CD8-positive, alpha-beta T cell (primary cell): ENCODE measurements at regions of chr2 and their contacts with region 1.

Region 1: GRCh38 chr2:20642055-20642971 is 8.6 kb downstream of the HS1BP3 start:
- DNase-seq: peak; percentile 52 to 83 (median 71)
- ATAC-seq: peak; percentile 100
- H3K4me3 ChIP-seq: no peak overlapping the region
- H3K4me3 Mint-ChIP-seq: no peak overlapping the region
- H3K27ac ChIP-seq: no peak overlapping the region
- H3K27ac Mint-ChIP-seq: no peak overlapping the region
- H3K4me1 ChIP-seq: peaks cover 4% of the 10 kb centered on the region
- H3K4me1 Mint-ChIP-seq: peaks cover 4% of the 10 kb centered on the region
- H3K27me3 ChIP-seq: no peaks in the 10 kb centered on the region
- H3K27me3 Mint-ChIP-seq: no peaks in the 10 kb centered on the region
- CTCF ChIP-seq: peak; percentile 69

Region 2: DNA sequence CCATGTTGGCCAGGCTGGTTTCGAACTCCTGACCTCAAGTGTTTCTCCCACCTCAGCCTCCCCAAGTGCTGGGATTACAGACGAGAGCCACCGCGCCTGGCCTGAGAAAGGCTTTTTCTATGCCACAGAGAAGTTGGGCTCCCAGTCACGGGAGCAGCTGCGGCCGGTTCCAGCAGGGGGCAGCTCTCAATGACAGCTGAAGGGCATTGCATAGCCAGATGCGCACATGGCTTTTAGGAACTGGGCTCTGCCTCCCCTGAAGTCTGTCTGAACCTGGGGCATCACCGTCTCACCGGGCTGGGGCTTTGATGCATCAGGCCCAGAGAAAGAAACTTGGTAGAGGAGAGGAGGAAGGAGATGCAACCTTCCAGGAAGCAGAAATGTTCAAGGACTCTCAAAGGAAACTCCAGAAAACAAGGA is 506.7 kb before region 1 on chr2:
- CTCF ChIA-PET with region 1: no interaction called
- POLR2A ChIA-PET with region 1: no interaction called
- intact Hi-C with region 1: loop called in 1 of 2 experiments (anchors 5 kb)
- DNase-seq: peak in 4 of 9 experiments; percentile 13 to 23 (median 18)
- ATAC-seq: no peak
- H3K4me3 ChIP-seq: no peak overlapping the region
- H3K4me3 Mint-ChIP-seq: no peak overlapping the region
- H3K27ac ChIP-seq: no peak overlapping the region
- H3K27ac Mint-ChIP-seq: no peak overlapping the region
- H3K4me1 ChIP-seq: no peaks in the 10 kb centered on the region
- H3K4me1 Mint-ChIP-seq: no peaks in the 10 kb centered on the region
- H3K27me3 ChIP-seq: no peaks in the 10 kb centered on the region
- H3K27me3 Mint-ChIP-seq: peaks cover 10% of the 10 kb centered on the region
- CTCF ChIP-seq: no peak

Region 3: GRCh38 chr2:20429528-20429927 is 212.8 kb before region 1 on chr2:
- CTCF ChIA-PET with region 1: interaction called, 13 read pairs
- POLR2A ChIA-PET with region 1: no interaction called
- intact Hi-C with region 1: no loop called
- DNase-seq: no peak
- ATAC-seq: no peak
- H3K4me3 ChIP-seq: no peak overlapping the region
- H3K4me3 Mint-ChIP-seq: no peak overlapping the region
- H3K27ac ChIP-seq: no peak overlapping the region
- H3K27ac Mint-ChIP-seq: no peak overlapping the region
- H3K4me1 ChIP-seq: peaks cover 9% of the 10 kb centered on the region
- H3K4me1 Mint-ChIP-seq: peaks cover 16% of the 10 kb centered on the region
- H3K27me3 ChIP-seq: peaks cover 0 to 3% of the 10 kb centered on the region in 2 experiments
- H3K27me3 Mint-ChIP-seq: peaks cover 5% of the 10 kb centered on the region
- CTCF ChIP-seq: no peak

Region 4: DNA sequence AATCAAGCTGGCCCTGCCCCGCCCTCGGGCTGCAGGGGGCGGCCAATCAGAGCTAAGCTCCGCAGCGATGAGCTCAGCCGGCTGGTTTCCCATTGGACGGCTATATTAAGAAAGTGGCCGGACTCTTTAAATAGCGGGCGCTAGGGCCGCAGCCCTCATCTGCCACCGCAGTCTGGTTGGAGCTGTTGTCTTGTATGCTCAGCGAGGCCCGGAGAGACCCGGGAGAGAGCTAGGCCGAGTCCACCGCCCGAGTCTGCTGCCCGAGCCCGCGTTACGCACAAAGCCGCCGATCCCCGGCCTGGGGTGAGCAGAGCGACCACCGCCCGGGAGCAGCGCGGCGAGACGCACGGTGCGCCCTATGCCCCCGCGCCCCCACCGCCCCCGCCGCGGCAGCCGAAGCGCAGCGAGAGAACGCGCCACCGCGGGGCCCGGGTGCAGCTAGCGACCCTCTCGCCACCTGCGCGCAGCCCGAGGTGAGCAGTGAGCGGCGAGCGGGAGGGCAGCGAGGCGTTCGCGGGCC is 195.3 kb before region 1 on chr2 and contains the start of gene RHOB:
- CTCF ChIA-PET with region 1: interaction called, 97 read pairs
- POLR2A ChIA-PET with region 1: interaction called, 11 read pairs
- intact Hi-C with region 1: loop called in 1 of 2 experiments (anchors 1 kb)
- DNase-seq: peak; percentile 77 to 97 (median 86)
- ATAC-seq: peak; percentile 96
- H3K4me3 ChIP-seq: peak within 1 kb of the TSS; percentile 71 to 77
- H3K4me3 Mint-ChIP-seq: peak within 1 kb of the TSS; percentile 85
- H3K27ac ChIP-seq: peak within 1 kb of the TSS; percentile 66 to 78
- H3K27ac Mint-ChIP-seq: peak within 1 kb of the TSS; percentile 57
- H3K4me1 ChIP-seq: peaks cover 17% of the 10 kb centered on the region
- H3K4me1 Mint-ChIP-seq: peaks cover 13% of the 10 kb centered on the region
- H3K27me3 ChIP-seq: peaks cover 0 to 7% of the 10 kb centered on the region in 2 experiments
- H3K27me3 Mint-ChIP-seq: peaks cover 10% of the 10 kb centered on the region
- CTCF ChIP-seq: no peak
- total RNA-seq, gene RHOB: 24.0 to 24.7 TPM